Left ventricle myocardium inferior (tissue), 1 donor: ENCODE measurements at regions of chr2 and their contacts with region 1.

Region 1: GRCh38 chr2:177164584-177165052 is 48.0 kb upstream of the HNRNPA3 start:
- DNase-seq: peak; percentile 80
- H3K4me3 ChIP-seq: peak overlapping the region; percentile 62
- H3K27ac ChIP-seq: peak overlapping the region; percentile 87
- H3K4me1 ChIP-seq: peaks cover 30% of the 10 kb centered on the region
- H3K27me3 ChIP-seq: no peaks in the 10 kb centered on the region
- CTCF ChIP-seq: peak; percentile 100

Region 2: GRCh38 chr2:177263451-177264208 is 99.0 kb after region 1 on chr2:
- intact Hi-C with region 1: loop called (anchors 10 kb)
- DNase-seq: peak; percentile 99
- H3K4me3 ChIP-seq: peak overlapping the region; percentile 90
- H3K27ac ChIP-seq: peak overlapping the region; percentile 100
- H3K4me1 ChIP-seq: peaks cover 76% of the 10 kb centered on the region
- H3K27me3 ChIP-seq: no peaks in the 10 kb centered on the region
- CTCF ChIP-seq: peak; percentile 90

Region 3: DNA sequence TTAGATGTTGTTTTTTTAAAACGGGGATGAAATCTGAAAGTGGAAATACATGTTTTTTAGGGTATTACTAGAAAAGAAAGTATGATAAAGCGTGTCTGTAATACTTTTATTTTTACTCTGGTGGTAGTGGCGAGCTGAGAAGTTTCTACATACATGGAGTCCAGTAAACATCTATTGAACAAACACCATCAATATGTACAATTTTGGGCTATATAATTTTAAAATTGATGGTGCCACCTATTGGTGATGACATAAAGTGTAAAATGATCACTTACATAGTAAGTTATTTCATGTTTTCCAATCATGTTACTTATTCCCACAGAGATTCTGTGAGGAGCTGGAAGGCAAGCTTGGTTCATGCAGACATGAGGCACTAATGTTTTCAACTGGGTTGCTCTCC is 131.4 kb after region 1 on chr2:
- intact Hi-C with region 1: loop called (anchors 10 kb)
- DNase-seq: no peak
- H3K4me3 ChIP-seq: no peak overlapping the region
- H3K27ac ChIP-seq: peak overlapping the region; percentile 59
- H3K4me1 ChIP-seq: peaks cover 14% of the 10 kb centered on the region
- H3K27me3 ChIP-seq: no peaks in the 10 kb centered on the region
- CTCF ChIP-seq: peak; percentile 54

Region 4: GRCh38 chr2:177332041-177332991 is 167.7 kb after region 1 on chr2:
- intact Hi-C with region 1: loop called (anchors 2 kb)
- DNase-seq: peak; percentile 22
- H3K4me3 ChIP-seq: peak overlapping the region; percentile 12
- H3K27ac ChIP-seq: peak overlapping the region; percentile 12
- H3K4me1 ChIP-seq: peaks cover 5% of the 10 kb centered on the region
- H3K27me3 ChIP-seq: no peaks in the 10 kb centered on the region
- CTCF ChIP-seq: peak; percentile 73

Region 5: DNA sequence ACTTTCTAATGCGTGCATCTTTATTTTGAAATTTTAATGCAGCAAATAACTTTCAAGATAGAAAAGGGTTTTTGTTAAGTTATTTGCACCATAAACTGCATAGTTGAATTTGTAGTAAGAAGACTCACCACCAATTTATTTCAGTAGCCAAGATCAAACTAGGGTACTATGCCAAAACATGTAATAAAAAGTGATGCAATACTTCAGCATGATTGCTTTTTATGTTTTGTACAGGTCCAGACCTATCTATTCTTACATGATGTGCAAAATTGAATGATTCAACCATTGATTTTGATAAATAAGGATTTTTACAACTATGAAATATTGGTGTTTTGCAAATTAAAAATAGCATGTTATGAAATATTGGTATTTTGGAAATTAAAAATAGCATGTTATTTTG is 254.7 kb after region 1 on chr2:
- intact Hi-C with region 1: loop called (anchors 5 kb)
- DNase-seq: no peak
- H3K4me3 ChIP-seq: no peak overlapping the region
- H3K27ac ChIP-seq: no peak overlapping the region
- H3K4me1 ChIP-seq: peaks cover 31% of the 10 kb centered on the region
- H3K27me3 ChIP-seq: no peaks in the 10 kb centered on the region
- CTCF ChIP-seq: no peak

Region 6: GRCh38 chr2:177758591-177759371 is 594.2 kb after region 1 on chr2:
- intact Hi-C with region 1: loop called (anchors 10 kb)
- DNase-seq: no peak
- H3K4me3 ChIP-seq: no peak overlapping the region
- H3K27ac ChIP-seq: no peak overlapping the region
- H3K4me1 ChIP-seq: peaks cover 27% of the 10 kb centered on the region
- H3K27me3 ChIP-seq: no peaks in the 10 kb centered on the region
- CTCF ChIP-seq: peak; percentile 65

Region 7: GRCh38 chr2:178478439-178479274 is 1314.0 kb after region 1 on chr2 and contains the start of gene FKBP7:
- intact Hi-C with region 1: no loop called
- DNase-seq: peak; percentile 89
- H3K4me3 ChIP-seq: peak within 1 kb of the TSS; percentile 83
- H3K27ac ChIP-seq: peak within 1 kb of the TSS; percentile 90
- H3K4me1 ChIP-seq: peaks cover 69% of the 10 kb centered on the region
- H3K27me3 ChIP-seq: no peaks in the 10 kb centered on the region
- CTCF ChIP-seq: peak; percentile 74
- total RNA-seq, gene FKBP7: 10.8 TPM